Mucosa of descending colon (tissue), 3 donors: ENCODE measurements at regions of chr17 and their contacts with region 1.

Region 1: DNA sequence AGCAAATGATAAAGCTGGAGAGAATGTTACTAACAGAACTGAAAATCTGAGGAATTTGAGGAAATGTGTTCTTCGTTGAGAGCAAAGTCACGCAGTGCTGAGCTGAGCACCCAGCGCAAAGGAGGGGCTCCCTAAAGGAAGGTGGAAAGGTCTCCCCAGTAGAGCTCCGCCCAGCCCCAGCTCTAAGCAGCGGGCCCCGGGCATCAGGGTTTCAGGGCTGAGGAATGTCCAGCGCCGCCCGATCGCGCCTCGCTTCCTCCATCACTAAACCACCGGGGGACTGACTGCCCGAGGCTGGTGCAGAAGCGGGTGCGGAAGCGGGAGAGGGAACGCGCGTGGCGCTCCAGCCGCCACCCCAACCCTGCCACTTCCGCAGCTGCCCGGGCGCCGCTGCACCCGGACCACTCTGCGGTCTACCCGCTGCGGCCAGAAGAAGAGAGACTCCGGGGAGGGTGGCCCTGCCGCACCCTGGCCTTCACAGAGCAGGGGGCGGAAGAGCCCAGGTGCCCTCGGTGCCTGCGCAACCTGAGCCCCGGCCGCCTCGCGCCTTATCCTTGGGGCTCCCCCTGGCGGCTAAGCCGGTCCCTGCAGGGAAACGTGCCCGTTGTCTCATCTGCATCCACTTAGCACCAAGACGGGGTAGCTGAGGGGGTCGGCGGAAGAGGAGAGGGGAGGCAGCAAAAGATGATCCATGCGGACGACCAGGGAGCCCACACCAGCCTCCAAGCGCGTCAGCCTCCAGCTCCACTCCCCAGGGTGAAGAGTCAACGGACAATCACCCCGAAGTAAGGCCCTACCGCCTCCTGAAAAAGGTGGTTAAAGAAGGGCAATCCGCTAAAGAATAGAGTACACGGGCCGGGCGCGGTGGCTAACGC is 12.4 kb upstream of the GUCY2D start:
- DNase-seq: peak; percentile 88 to 96 (median 94)
- ATAC-seq: peak; percentile 98
- H3K4me3 ChIP-seq: peak overlapping the region; percentile 7
- H3K4me1 ChIP-seq: peaks cover 3% of the 10 kb centered on the region
- CTCF ChIP-seq: peak; percentile 97

Region 2: DNA sequence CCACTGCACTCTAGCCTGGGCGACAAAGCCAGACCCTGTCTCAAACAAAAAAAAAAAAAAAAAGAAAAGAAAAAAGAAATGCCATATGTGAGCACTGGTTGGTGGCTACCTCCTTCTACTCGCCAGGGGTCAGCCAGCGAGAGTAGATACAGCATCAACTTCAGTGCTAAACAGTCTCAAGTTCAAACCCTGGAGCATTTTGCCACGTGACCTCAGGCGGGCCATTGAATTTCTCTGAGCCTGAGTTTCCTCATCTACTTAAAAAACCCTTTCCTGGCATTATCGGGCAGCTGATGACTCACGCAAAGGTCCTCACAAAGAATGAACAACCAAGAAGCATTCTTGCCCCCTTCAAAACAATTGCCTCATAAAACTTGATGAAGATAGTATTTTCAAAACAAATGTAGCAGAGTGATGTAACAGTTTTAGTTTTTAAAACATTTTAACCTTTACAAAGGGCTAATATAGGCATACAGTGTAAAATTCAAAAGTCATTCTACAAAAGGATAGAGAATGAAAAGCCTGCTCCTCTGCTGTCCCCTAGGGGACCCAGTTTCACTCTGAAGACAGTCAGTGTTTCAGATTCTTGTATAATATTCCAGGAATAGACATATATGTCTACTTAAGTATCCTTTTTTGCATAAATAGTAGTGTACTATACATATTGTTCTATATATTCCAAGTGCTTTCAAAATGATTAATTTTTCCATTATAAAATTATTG is 244.1 kb before region 1 on chr17:
- intact Hi-C with region 1: loop called in 1 of 2 experiments (anchors 10 kb)
- DNase-seq: no peak
- ATAC-seq: no peak
- H3K4me3 ChIP-seq: no peak overlapping the region
- H3K4me1 ChIP-seq: no peaks in the 10 kb centered on the region
- CTCF ChIP-seq: no peak

Region 3: GRCh38 chr17:7862692-7863437 is 127.2 kb before region 1 on chr17:
- intact Hi-C with region 1: loop called in 1 of 2 experiments (anchors 5 kb)
- DNase-seq: peak in 1 of 3 donors; percentile 76
- ATAC-seq: no peak
- H3K4me3 ChIP-seq: no peak overlapping the region
- H3K4me1 ChIP-seq: peaks cover 24% of the 10 kb centered on the region
- CTCF ChIP-seq: peak; percentile 39

Region 4: GRCh38 chr17:7903154-7904103 is 86.6 kb before region 1 on chr17:
- intact Hi-C with region 1: loop called in 1 of 2 experiments (anchors 10 kb)
- DNase-seq: no peak
- ATAC-seq: no peak
- H3K4me3 ChIP-seq: no peak overlapping the region
- H3K4me1 ChIP-seq: no peaks in the 10 kb centered on the region
- CTCF ChIP-seq: no peak

Region 5: GRCh38 chr17:7912927-7913524 is 77.0 kb before region 1 on chr17:
- intact Hi-C with region 1: loop called (anchors 5 to 10 kb)
- DNase-seq: peak in 1 of 3 donors; percentile 68
- ATAC-seq: peak; percentile 42
- H3K4me3 ChIP-seq: no peak overlapping the region
- H3K4me1 ChIP-seq: peaks cover 16% of the 10 kb centered on the region
- CTCF ChIP-seq: peak; percentile 48

Region 6: GRCh38 chr17:8057691-8058114 is 67.7 kb after region 1 on chr17:
- intact Hi-C with region 1: no loop called
- DNase-seq: peak in 1 of 3 donors; percentile 63
- ATAC-seq: peak; percentile 77
- H3K4me3 ChIP-seq: no peak overlapping the region
- H3K4me1 ChIP-seq: peaks cover 11% of the 10 kb centered on the region
- CTCF ChIP-seq: peak; percentile 35